ENCODE measurements at regions of chr16 and their contacts with region 1.

Region 1: DNA sequence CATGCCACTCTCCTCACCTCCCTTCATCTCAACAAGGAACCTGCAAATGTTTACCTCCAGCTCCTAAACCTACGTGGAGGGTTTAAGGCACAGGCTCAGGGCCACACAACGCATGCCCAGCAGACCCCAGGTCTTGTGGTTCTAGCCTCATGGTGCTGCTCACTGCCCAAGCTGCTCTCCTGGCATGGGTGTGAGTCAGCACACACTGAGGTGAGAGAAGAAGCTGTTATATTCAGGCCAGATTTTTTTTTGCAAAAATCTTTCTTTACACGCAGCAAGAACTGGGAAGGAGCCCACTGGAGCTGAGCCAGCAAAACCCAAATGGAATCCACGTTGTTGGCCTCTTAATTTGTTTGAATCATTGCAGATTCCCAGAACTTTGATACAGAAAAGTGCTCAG is 5.5 kb upstream of the C16orf96 start:
- H3K4me3 ChIP-seq: no peak overlapping the region
- H3K27ac ChIP-seq: no peak overlapping the region
- H3K4me1 ChIP-seq: no peaks in the 10 kb centered on the region
- CTCF ChIP-seq: no peak

Region 2: GRCh38 chr16:4517812-4518680 is 32.5 kb before region 1 on chr16:
- CTCF ChIA-PET with region 1: interaction called, 21 read pairs
- POLR2A ChIA-PET with region 1: no interaction called
- H3K4me3 ChIP-seq: no peak overlapping the region
- H3K27ac ChIP-seq: no peak overlapping the region
- H3K4me1 ChIP-seq: no peaks in the 10 kb centered on the region
- CTCF ChIP-seq: peak; percentile 74

Region 3: GRCh38 chr16:4538350-4539235 is 12.0 kb before region 1 on chr16 and contains the start of gene CDIP1:
- CTCF ChIA-PET with region 1: interaction called, 21 read pairs
- POLR2A ChIA-PET with region 1: interaction called, 5 read pairs
- H3K4me3 ChIP-seq: peak within 1 kb of the TSS; percentile 67
- H3K27ac ChIP-seq: peak within 1 kb of the TSS; percentile 65; the same call in 1 of the 2 replicates
- H3K4me1 ChIP-seq: no peaks in the 10 kb centered on the region
- CTCF ChIP-seq: peak; percentile 71; the same call in 1 of the 2 replicates

Region 4: GRCh38 chr16:4561596-4561995 is 11.0 kb after region 1 on chr16:
- CTCF ChIA-PET with region 1: interaction called, 11 read pairs
- POLR2A ChIA-PET with region 1: no interaction called
- H3K4me3 ChIP-seq: no peak overlapping the region
- H3K27ac ChIP-seq: no peak overlapping the region
- H3K4me1 ChIP-seq: no peaks in the 10 kb centered on the region
- CTCF ChIP-seq: no peak

Region 5: DNA sequence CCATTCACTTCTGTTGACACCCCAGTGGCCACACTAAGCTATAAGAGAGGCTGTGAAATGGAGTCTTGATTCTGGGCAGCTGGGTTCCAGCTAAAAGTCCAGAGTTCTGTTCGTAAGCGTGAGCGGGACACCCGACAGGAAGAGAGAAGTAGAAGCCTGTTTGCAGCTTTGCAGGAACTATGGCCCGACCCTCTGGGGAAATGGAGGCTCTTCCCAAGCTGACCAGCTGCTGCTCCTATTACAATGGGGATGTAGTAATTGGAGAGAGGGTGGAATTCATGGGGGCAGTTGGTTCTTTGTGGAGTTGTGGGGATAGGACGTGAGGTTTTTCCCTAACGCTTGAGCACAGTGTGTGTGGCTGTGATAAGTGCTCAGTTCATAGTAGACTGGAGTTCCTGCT is 35.7 kb after region 1 on chr16:
- CTCF ChIA-PET with region 1: interaction called, 11 read pairs
- POLR2A ChIA-PET with region 1: no interaction called
- H3K4me3 ChIP-seq: no peak overlapping the region
- H3K27ac ChIP-seq: no peak overlapping the region
- H3K4me1 ChIP-seq: no peaks in the 10 kb centered on the region
- CTCF ChIP-seq: no peak